Left ventricle myocardium inferior (tissue), 1 donor: ENCODE measurements at regions of chr11 and their contacts with region 1.

Region 1: GRCh38 chr11:73242251-73243079 is 24.4 kb downstream of the P2RY2 start:
- DNase-seq: peak; percentile 74
- H3K4me3 ChIP-seq: no peak overlapping the region
- H3K27ac ChIP-seq: peak overlapping the region; percentile 36
- H3K4me1 ChIP-seq: peaks cover 55% of the 10 kb centered on the region
- H3K27me3 ChIP-seq: no peaks in the 10 kb centered on the region
- CTCF ChIP-seq: peak; percentile 90

Region 2: GRCh38 chr11:73184953-73185671 is 57.4 kb before region 1 on chr11:
- intact Hi-C with region 1: loop called (anchors 10 kb)
- DNase-seq: peak; percentile 68
- H3K4me3 ChIP-seq: no peak overlapping the region
- H3K27ac ChIP-seq: peak overlapping the region; percentile 21
- H3K4me1 ChIP-seq: peaks cover 66% of the 10 kb centered on the region
- H3K27me3 ChIP-seq: no peaks in the 10 kb centered on the region
- CTCF ChIP-seq: peak; percentile 92

Region 3: GRCh38 chr11:73204711-73205121 is 37.7 kb before region 1 on chr11:
- intact Hi-C with region 1: no loop called
- DNase-seq: peak; percentile 38
- H3K4me3 ChIP-seq: no peak overlapping the region
- H3K27ac ChIP-seq: no peak overlapping the region
- H3K4me1 ChIP-seq: peaks cover 5% of the 10 kb centered on the region
- H3K27me3 ChIP-seq: no peaks in the 10 kb centered on the region
- CTCF ChIP-seq: no peak